ENCODE measurements at regions of chr11 and their contacts with region 1.

Region 1: DNA sequence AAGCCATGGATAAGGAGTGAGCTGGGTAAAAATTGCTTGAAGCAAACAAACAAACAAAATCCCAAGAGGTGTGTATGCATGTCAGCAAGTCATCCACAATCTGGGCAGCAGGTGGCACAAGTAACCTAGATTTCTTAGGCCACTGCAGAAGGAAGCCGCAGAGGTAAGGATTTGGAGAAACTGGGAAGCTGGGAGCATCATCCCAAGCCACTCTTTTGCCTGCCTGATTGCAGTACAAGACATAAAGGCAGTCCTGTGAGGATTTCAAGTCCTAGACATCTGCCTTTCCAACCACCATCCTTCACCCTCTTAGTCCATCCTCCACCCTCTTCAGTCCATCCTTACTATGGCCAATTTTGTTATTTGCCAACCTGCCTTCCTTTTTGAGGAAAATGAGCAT is 67.2 kb upstream of the BMAL1 start:
- DNase-seq: no peak
- H3K4me3 ChIP-seq: no peak overlapping the region
- H3K27ac ChIP-seq: no peak overlapping the region
- H3K4me1 ChIP-seq: peaks cover 0 to 26% (median 14%) of the 10 kb centered on the region in 6 donors
- H3K27me3 ChIP-seq: peaks cover 0 to 8% (median 0%) of the 10 kb centered on the region in 7 donors
- CTCF ChIP-seq: peak in 9 of 11 experiments; percentile 23 to 60 (median 49)
- POLR2A ChIP-seq: no peak

Region 2: DNA sequence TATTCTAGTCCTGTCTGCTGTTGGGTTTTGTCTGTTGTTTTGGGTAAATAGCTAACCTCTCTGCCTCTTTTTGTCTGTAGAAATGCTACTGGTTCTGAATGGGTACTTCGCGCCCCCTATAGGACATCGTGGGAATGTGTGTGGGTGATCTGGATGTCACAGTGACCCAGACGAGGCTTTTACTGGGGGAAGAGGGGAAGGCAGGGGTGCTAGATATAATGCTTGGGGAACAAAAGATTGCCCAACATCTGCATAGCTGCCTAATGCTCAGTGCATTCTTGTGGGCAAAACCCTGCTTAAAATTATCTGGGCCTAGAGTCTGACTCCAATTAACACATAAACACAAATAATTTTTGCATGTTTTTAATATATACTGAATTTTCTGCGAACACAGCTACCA is 124.9 kb after region 1 on chr11:
- intact Hi-C with region 1: loop called (anchors 5 kb)
- DNase-seq: no peak
- H3K4me3 ChIP-seq: no peak overlapping the region
- H3K27ac ChIP-seq: no peak overlapping the region
- H3K4me1 ChIP-seq: peaks cover 15 to 95% (median 62%) of the 10 kb centered on the region in 6 donors
- H3K27me3 ChIP-seq: no peaks in the 10 kb centered on the region
- CTCF ChIP-seq: peak; percentile 43 to 80 (median 76)
- POLR2A ChIP-seq: no peak

Measured in spleen (tissue), 13 donors.